PC-9 (cell line): ENCODE measurements at regions of chr5 and their contacts with region 1.

Region 1: DNA sequence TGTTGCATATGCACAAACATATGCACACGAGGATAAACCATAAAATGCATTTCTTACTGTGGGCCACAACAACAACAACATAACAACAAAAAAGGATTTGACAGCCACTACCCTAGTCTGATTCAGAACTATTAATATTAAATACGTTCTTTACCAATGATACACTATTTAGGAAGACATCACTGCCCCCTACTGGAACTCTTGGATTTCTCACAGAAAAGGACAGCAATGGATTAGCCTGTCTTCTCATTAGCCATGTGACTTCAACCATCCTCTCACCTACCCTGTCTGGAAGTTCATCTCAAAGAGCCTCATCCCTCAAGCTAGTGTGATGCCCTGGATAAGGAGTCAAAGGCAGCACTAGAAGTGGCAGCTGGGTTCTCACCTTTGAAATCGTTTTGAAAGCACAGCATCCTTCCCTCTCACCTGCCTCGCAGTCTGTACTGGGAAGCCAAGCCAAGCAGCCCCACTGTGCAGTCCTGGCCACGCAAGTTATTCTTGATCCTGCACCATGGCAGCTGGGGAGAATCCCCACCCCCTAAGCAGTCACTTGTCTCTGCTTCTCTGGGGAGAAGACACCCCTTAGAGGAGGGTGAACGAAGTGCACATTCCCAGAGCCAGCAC is 64.6 kb downstream of the SH3TC2 start:
- DNase-seq: peak; percentile 46 to 54
- H3K4me3 ChIP-seq: no peak overlapping the region
- H3K27ac ChIP-seq: no peak overlapping the region
- H3K4me1 ChIP-seq: peaks cover 46% of the 10 kb centered on the region
- H3K27me3 ChIP-seq: no peaks in the 10 kb centered on the region
- CTCF ChIP-seq: peak; percentile 85

Region 2: GRCh38 chr5:148826053-148826738 is 172.1 kb before region 1 on chr5 and contains the start of gene ADRB2:
- CTCF ChIA-PET with region 1: interaction called, 3 read pairs
- POLR2A ChIA-PET with region 1: no interaction called
- intact Hi-C with region 1: loop called (anchors 1 kb)
- DNase-seq: peak; percentile 90 to 98
- H3K4me3 ChIP-seq: peak within 1 kb of the TSS; percentile 63
- H3K27ac ChIP-seq: peak within 1 kb of the TSS; percentile 68
- H3K4me1 ChIP-seq: peaks cover 24% of the 10 kb centered on the region
- H3K27me3 ChIP-seq: no peaks in the 10 kb centered on the region
- CTCF ChIP-seq: no peak
- total RNA-seq, gene ADRB2: 2.8 and 3.1 TPM in 2 replicates

Region 3: DNA sequence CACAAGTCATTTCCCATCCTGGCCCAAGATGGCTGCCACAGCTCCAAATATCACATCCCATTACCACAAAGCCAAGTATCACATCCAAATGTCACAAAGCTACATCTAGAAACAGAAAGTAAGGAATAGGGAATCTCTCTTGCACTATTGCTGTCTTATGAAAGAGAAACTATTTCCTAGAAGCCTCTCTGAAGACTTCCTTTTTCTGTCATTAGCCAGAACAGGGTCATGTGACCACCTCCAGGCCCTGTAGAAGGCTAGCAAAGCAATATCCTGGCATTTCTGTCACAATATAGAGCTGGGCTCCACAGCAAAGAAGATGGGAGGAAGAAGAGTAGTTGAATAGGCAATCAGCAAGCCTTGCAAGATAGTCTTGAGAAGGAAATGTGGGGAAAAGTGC is 34.6 kb before region 1 on chr5:
- CTCF ChIA-PET with region 1: interaction called, 3 read pairs
- POLR2A ChIA-PET with region 1: no interaction called
- intact Hi-C with region 1: loop called (anchors 1 kb)
- DNase-seq: peak in 1 of 2 experiments; percentile 31
- H3K4me3 ChIP-seq: no peak overlapping the region
- H3K27ac ChIP-seq: peak overlapping the region; percentile 34
- H3K4me1 ChIP-seq: peaks cover 57% of the 10 kb centered on the region
- H3K27me3 ChIP-seq: no peaks in the 10 kb centered on the region
- CTCF ChIP-seq: no peak

Region 4: GRCh38 chr5:149011074-149011476 is 12.8 kb after region 1 on chr5:
- CTCF ChIA-PET with region 1: interaction called, 3 read pairs
- POLR2A ChIA-PET with region 1: no interaction called
- intact Hi-C with region 1: loop called (anchors 1 kb)
- DNase-seq: peak; percentile 92 to 98
- H3K4me3 ChIP-seq: no peak overlapping the region
- H3K27ac ChIP-seq: peak overlapping the region; percentile 96
- H3K4me1 ChIP-seq: peaks cover 48% of the 10 kb centered on the region
- H3K27me3 ChIP-seq: no peaks in the 10 kb centered on the region
- CTCF ChIP-seq: no peak; the same call in 1 of the 2 replicates

Region 5: GRCh38 chr5:149022200-149022599 is 23.9 kb after region 1 on chr5:
- CTCF ChIA-PET with region 1: no interaction called
- POLR2A ChIA-PET with region 1: no interaction called
- intact Hi-C with region 1: no loop called
- DNase-seq: no peak
- H3K4me3 ChIP-seq: no peak overlapping the region
- H3K27ac ChIP-seq: no peak overlapping the region
- H3K4me1 ChIP-seq: peaks cover 9% of the 10 kb centered on the region
- H3K27me3 ChIP-seq: no peaks in the 10 kb centered on the region
- CTCF ChIP-seq: no peak

Region 6: DNA sequence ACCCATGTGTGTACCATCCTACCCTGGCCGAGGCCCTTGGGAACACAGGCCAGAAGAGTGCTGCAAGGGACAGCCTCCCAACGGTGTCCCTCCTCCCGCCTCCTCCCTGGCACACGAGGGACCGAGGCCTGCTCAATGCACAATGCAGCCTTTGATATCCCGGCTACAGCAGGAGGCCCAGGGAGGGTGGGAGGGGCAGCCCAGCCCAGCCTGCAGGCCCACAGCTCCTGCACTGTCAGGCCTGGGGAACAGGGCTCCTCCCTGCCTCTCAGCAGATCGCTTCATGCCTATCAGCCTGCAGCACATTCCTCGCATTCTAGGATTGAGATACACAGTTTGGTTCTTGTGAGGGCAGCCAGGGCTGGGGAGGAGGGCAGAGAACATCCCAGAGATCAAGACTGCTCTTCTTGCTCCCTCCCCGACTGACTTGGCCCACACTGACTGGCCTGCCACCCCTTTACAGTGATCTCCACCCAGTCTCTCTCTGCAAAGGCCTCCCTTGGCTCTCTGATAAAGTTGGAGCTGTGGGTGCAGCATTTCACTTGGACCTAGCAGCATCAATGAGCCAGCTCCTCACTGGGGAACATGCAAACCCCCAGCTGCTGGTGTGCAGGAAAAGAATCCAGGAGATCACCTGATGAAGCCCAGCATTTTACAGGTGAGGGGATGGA is 64.9 kb after region 1 on chr5 and contains the start of gene SH3TC2:
- CTCF ChIA-PET with region 1: no interaction called
- POLR2A ChIA-PET with region 1: no interaction called
- intact Hi-C with region 1: loop called (anchors 2 kb)
- DNase-seq: peak; percentile 81 to 90
- H3K4me3 ChIP-seq: peak within 1 kb of the TSS; percentile 46; the same call in 1 of the 2 replicates
- H3K27ac ChIP-seq: peak within 1 kb of the TSS; percentile 99
- H3K4me1 ChIP-seq: peaks cover 68% of the 10 kb centered on the region
- H3K27me3 ChIP-seq: no peaks in the 10 kb centered on the region
- CTCF ChIP-seq: no peak
- total RNA-seq, gene SH3TC2: 32.1 and 38.8 TPM in 2 replicates

Region 7: DNA sequence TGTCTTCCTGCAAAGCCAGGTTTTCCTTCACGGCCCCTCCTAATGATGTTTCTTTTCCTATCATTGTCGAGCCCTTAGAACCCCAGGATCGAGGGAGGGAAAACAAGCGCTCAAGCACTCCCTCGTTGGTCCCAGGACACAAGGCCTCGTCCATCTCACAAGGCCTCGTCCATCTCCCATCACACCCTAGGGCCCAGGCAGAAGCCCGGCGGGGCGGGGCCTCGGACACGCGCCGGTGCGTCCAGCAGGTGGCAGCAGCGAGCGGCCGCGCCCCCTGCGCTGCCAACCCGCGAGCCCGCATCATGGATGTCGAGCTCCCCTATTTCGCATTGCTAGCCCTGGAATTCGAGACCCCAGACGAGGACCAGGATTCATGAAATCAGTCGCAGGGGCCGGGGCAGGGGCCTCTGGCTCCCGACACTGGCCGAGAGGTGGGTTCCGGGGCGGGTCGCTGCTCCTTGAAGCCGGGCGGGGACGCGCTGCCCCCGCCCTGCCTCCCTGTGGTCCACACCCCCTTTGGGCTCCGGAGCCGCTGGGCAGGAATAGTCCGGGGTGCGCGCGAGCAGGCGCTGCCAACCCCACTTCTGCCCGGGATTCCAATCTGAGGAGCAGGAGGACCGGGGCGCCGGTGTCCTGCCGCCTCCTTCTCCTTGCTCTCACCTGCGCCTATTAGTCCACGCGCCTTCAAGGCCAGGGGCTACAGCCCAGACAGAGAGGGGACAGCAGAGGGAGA is 143.1 kb after region 1 on chr5 and contains the start of gene ABLIM3:
- CTCF ChIA-PET with region 1: no interaction called
- POLR2A ChIA-PET with region 1: interaction called, 10 read pairs
- intact Hi-C with region 1: no loop called
- DNase-seq: peak; percentile 54 to 91
- H3K4me3 ChIP-seq: peak within 1 kb of the TSS; percentile 97
- H3K27ac ChIP-seq: peak within 1 kb of the TSS; percentile 91
- H3K4me1 ChIP-seq: peaks cover 61% of the 10 kb centered on the region
- H3K27me3 ChIP-seq: no peaks in the 10 kb centered on the region
- CTCF ChIP-seq: peak; percentile 90
- total RNA-seq, gene ABLIM3: 101 and 111 TPM in 2 replicates

Region 8: GRCh38 chr5:149517461-149518122 is 519.3 kb after region 1 on chr5:
- CTCF ChIA-PET with region 1: no interaction called
- POLR2A ChIA-PET with region 1: no interaction called
- intact Hi-C with region 1: no loop called
- DNase-seq: no peak
- H3K4me3 ChIP-seq: no peak overlapping the region
- H3K27ac ChIP-seq: peak overlapping the region; percentile 6; the same call in 1 of the 2 replicates
- H3K4me1 ChIP-seq: no peaks in the 10 kb centered on the region
- H3K27me3 ChIP-seq: no peaks in the 10 kb centered on the region
- CTCF ChIP-seq: no peak